GM23248 (cell line): ENCODE measurements at regions of chr6 and their contacts with region 1.

Region 1: GRCh38 chr6:142566628-142567396 is 265.0 kb downstream of the ADGRG6 start:
- DNase-seq: peak; percentile 78
- H3K4me3 ChIP-seq: no peak overlapping the region
- H3K27ac ChIP-seq: no peak overlapping the region
- H3K4me1 ChIP-seq: peaks cover 41% of the 10 kb centered on the region
- H3K27me3 ChIP-seq: no peaks in the 10 kb centered on the region

Region 2: GRCh38 chr6:142671791-142672190 is 105.0 kb after region 1 on chr6:
- in situ Hi-C with region 1: loop called (anchors 10 kb)
- DNase-seq: no peak
- H3K4me3 ChIP-seq: no peak overlapping the region
- H3K27ac ChIP-seq: no peak overlapping the region
- H3K4me1 ChIP-seq: no peaks in the 10 kb centered on the region
- H3K27me3 ChIP-seq: peaks cover 33% of the 10 kb centered on the region; the same call in 1 of the 2 replicates

Region 3: DNA sequence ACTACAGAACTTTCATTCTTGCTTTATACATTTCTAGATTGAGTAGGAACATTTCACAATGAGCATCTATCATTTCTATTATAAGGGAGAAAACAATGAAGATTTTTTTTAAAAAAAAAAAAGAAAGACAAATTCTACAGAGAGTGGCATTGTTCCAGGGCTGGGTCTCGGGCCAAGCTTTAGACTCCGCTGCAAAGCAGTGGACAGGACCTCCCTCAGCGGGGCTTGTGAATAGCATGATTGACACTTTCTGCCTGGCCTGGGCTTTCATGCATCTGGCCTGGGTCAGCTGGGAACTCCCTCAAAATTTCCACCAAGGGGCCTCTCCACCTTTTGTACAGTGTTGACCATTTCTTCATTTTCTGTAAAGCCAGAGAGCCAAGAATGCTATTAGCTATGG is 434.0 kb after region 1 on chr6:
- in situ Hi-C with region 1: no loop called
- DNase-seq: no peak
- H3K4me3 ChIP-seq: no peak overlapping the region
- H3K27ac ChIP-seq: no peak overlapping the region
- H3K4me1 ChIP-seq: no peaks in the 10 kb centered on the region
- H3K27me3 ChIP-seq: no peaks in the 10 kb centered on the region